MCF 10A (cell line): ENCODE measurements at regions of chr2 and their contacts with region 1.

Region 1: GRCh38 chr2:45993476-45993991 is 303.7 kb upstream of the EPAS1 start:
- DNase-seq: peak; percentile 89
- H3K4me3 Mint-ChIP-seq: no peak overlapping the region
- H3K27ac Mint-ChIP-seq: no peak overlapping the region
- H3K4me1 Mint-ChIP-seq: peaks cover 27% of the 10 kb centered on the region
- H3K27me3 Mint-ChIP-seq: no peaks in the 10 kb centered on the region
- CTCF ChIP-seq: peak; percentile 84

Region 2: DNA sequence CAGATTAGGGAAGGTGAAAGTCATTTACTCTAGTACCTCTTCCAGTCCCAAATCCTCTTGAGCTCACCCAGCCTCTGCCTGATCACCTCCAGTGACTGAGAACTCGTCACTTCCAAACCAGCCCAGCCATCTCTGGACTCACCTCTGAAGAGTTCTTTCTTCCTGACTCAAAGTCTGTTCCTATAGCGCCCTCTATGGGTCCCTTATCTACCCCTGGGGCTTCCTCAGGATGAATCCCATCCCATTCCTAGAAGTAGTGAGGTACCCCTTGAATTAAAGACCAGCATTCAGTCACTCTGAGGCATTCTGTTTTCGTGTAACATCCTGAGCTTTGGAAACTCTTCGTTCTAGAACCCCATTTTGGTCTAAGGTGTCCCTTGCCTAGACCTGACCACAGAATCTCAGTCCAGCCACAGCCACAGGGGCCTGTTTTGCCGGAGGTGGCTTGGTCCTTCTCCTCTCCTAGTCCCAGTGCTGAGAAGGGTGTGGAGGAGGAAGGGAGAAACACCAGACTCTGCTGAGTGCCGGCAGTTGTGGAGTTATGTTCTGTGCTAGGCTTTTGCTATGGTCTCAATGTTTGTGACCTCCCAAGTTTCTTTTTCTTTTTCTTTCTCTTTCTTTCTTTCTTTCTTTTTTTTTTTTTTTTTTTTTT is 1019.3 kb before region 1 on chr2:
- CTCF ChIA-PET with region 1: no interaction called
- POLR2A ChIA-PET with region 1: no interaction called
- intact Hi-C with region 1: no loop called
- DNase-seq: peak; percentile 77
- H3K4me3 Mint-ChIP-seq: no peak overlapping the region
- H3K27ac Mint-ChIP-seq: no peak overlapping the region
- H3K4me1 Mint-ChIP-seq: peaks cover 5% of the 10 kb centered on the region
- H3K27me3 Mint-ChIP-seq: no peaks in the 10 kb centered on the region
- CTCF ChIP-seq: peak; percentile 63

Region 3: GRCh38 chr2:45650851-45651414 is 342.6 kb before region 1 on chr2:
- CTCF ChIA-PET with region 1: interaction called, 7 read pairs
- POLR2A ChIA-PET with region 1: interaction called, 13 read pairs
- intact Hi-C with region 1: no loop called
- DNase-seq: peak; percentile 95
- H3K4me3 Mint-ChIP-seq: peak overlapping the region; percentile 79
- H3K27ac Mint-ChIP-seq: peak overlapping the region; percentile 73
- H3K4me1 Mint-ChIP-seq: peaks cover 16% of the 10 kb centered on the region
- H3K27me3 Mint-ChIP-seq: no peaks in the 10 kb centered on the region
- CTCF ChIP-seq: peak; percentile 8

Region 4: GRCh38 chr2:45964226-45964845 is 29.2 kb before region 1 on chr2:
- CTCF ChIA-PET with region 1: interaction called, 16 read pairs
- POLR2A ChIA-PET with region 1: interaction called, 32 read pairs
- intact Hi-C with region 1: loop called (anchors 1 kb)
- DNase-seq: peak; percentile 100
- H3K4me3 Mint-ChIP-seq: no peak overlapping the region
- H3K27ac Mint-ChIP-seq: peak overlapping the region; percentile 84
- H3K4me1 Mint-ChIP-seq: peaks cover 42% of the 10 kb centered on the region
- H3K27me3 Mint-ChIP-seq: no peaks in the 10 kb centered on the region
- CTCF ChIP-seq: no peak

Region 5: GRCh38 chr2:46010925-46011490 is 17.5 kb after region 1 on chr2:
- CTCF ChIA-PET with region 1: interaction called, 19 read pairs
- POLR2A ChIA-PET with region 1: interaction called, 7 read pairs
- intact Hi-C with region 1: no loop called
- DNase-seq: peak; percentile 50
- H3K4me3 Mint-ChIP-seq: no peak overlapping the region
- H3K27ac Mint-ChIP-seq: no peak overlapping the region
- H3K4me1 Mint-ChIP-seq: no peaks in the 10 kb centered on the region
- H3K27me3 Mint-ChIP-seq: no peaks in the 10 kb centered on the region
- CTCF ChIP-seq: peak; percentile 54

Region 6: GRCh38 chr2:46364797-46365457 is 371.4 kb after region 1 on chr2:
- CTCF ChIA-PET with region 1: interaction called, 6 read pairs
- POLR2A ChIA-PET with region 1: no interaction called
- intact Hi-C with region 1: loop called (anchors 1 kb)
- DNase-seq: peak; percentile 67
- H3K4me3 Mint-ChIP-seq: no peak overlapping the region
- H3K27ac Mint-ChIP-seq: no peak overlapping the region
- H3K4me1 Mint-ChIP-seq: peaks cover 9% of the 10 kb centered on the region
- H3K27me3 Mint-ChIP-seq: no peaks in the 10 kb centered on the region
- CTCF ChIP-seq: peak; percentile 73

Region 7: GRCh38 chr2:46461011-46461674 is 467.6 kb after region 1 on chr2:
- CTCF ChIA-PET with region 1: interaction called, 17 read pairs
- POLR2A ChIA-PET with region 1: interaction called, 4 read pairs
- intact Hi-C with region 1: loop called (anchors 1 kb)
- DNase-seq: peak; percentile 68
- H3K4me3 Mint-ChIP-seq: no peak overlapping the region
- H3K27ac Mint-ChIP-seq: peak overlapping the region; percentile 33
- H3K4me1 Mint-ChIP-seq: peaks cover 6% of the 10 kb centered on the region
- H3K27me3 Mint-ChIP-seq: no peaks in the 10 kb centered on the region
- CTCF ChIP-seq: peak; percentile 99